ENCODE measurements at regions of chr5 and their contacts with region 1.

Region 1: GRCh38 chr5:37054391-37054790 is 177.8 kb downstream of the NIPBL start:
- DNase-seq: no peak
- ATAC-seq: no peak
- H3K4me3 ChIP-seq: no peak overlapping the region
- H3K27ac ChIP-seq: no peak overlapping the region
- H3K4me1 ChIP-seq: no peaks in the 10 kb centered on the region
- H3K27me3 ChIP-seq: no peaks in the 10 kb centered on the region
- CTCF ChIP-seq: no peak
- POLR2A ChIP-seq: no peak

Region 2: DNA sequence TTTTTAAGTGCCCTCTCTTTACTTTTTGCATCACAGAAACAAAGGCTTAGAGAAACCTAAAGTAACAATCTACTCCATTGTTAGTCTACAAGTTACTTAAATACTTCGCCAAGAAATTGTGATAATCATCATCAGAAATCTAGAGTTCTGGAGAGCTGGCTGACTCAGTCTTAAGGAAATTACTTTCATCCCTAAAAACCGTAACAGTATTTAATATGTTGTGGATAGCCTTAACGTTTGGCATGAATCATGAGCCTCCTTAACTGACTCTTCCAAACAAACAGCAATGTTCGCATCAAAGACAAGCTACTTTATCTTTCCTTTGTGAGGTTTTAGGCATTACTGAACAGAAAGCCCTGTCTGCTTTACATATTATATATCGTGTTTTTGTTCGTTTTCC is 49.1 kb before region 1 on chr5:
- intact Hi-C with region 1: no loop called
- DNase-seq: no peak
- ATAC-seq: no peak
- H3K4me3 ChIP-seq: no peak overlapping the region
- H3K27ac ChIP-seq: no peak overlapping the region
- H3K4me1 ChIP-seq: no peaks in the 10 kb centered on the region
- H3K27me3 ChIP-seq: no peaks in the 10 kb centered on the region
- CTCF ChIP-seq: no peak
- POLR2A ChIP-seq: no peak

Region 3: DNA sequence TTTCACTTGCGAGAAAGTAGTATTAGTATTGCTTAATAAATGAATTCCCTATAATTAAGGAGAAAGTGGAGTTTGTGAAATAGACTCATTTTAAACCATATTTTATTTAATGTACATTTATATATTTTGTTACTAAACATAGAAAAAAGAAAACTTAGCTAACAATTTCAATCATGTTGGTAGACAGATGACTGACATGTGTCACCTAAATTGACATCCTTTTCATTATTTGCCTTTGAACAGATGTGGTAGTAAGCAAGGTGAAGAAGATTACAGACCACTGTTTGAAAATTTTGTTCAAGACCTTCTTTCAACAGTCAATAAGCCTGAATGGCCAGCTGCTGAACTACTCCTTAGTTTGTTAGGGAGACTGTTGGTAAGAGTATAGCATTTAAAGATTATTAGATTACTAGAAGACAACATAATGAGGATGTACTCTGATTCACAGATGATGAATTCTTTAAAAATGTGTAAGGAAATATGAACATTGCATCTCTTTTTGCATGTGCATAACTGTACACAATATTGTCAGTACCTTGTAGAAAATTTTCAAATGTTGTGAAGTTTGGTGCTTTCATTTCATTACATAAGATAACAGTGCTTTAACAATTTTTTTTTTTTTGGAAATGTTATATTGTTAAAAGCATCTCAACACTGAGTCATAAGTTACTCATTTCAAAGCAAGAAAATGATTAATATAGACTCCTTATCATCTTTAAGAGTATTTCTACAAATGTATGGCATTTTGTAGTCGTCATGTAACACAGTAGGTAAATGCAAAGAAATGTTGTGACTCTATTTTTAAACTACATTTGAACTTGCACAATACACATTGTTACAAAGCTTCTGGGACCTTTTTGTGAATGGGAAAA is 38.4 kb before region 1 on chr5:
- intact Hi-C with region 1: loop called in 2 of 10 experiments (anchors 5 kb)
- DNase-seq: no peak
- ATAC-seq: no peak
- H3K4me3 ChIP-seq: no peak overlapping the region
- H3K27ac ChIP-seq: no peak overlapping the region
- H3K4me1 ChIP-seq: no peaks in the 10 kb centered on the region
- H3K27me3 ChIP-seq: no peaks in the 10 kb centered on the region
- CTCF ChIP-seq: no peak
- POLR2A ChIP-seq: no peak

Region 4: DNA sequence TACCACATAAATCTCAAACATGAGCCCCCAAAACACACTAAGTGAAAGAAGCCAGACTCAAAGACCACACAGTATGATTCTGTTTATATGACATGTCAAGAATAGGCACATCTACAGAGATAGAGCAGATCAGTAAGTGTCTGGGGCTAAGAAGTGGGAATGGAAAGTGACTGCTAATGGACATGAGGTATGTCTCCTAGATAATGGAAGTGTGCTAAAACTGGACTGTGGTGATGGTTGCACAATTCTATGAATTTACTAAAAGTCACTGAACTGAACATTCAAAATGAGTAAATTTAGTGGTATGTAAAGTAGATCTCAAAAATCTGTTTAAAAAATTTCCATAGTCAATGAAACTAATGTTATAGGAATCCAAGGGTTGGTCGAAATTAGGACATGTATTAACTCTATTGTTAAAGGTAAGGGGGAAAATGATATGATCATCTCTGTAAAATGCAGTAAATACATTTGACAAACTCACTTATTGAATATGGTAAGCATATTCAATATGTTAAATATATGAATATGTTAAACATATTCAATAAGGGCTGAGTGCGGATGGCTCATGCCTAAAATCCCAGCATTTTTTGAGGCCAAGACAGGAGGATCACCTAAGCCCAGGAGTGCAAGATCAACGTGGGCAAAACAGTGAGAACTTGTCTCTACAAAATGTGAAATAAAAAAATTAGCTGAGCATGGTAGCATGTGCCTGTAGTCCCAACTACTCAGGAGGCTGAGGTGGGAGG is 264.8 kb after region 1 on chr5:
- intact Hi-C with region 1: loop called in 1 of 10 experiments (anchors 10 kb)
- DNase-seq: no peak
- ATAC-seq: no peak
- H3K4me3 ChIP-seq: no peak overlapping the region
- H3K27ac ChIP-seq: no peak overlapping the region
- H3K4me1 ChIP-seq: no peaks in the 10 kb centered on the region
- H3K27me3 ChIP-seq: no peaks in the 10 kb centered on the region
- CTCF ChIP-seq: no peak
- POLR2A ChIP-seq: no peak